Activated CD4-positive, alpha-beta memory T cell treated with anti-CD3 and anti-CD28 coated beads, Interleukin-2, amount 10 ng/mL, durations not matched to agents 7 days and 5 days (primary cell): ENCODE measurements at regions of chr18 and their contacts with region 1.

Region 1: GRCh38 chr18:50356036-50356945 is 18.6 kb upstream of the SKA1 start:
- DNase-seq: peak; percentile 33
- H3K4me3 Mint-ChIP-seq: no peak overlapping the region
- H3K27ac Mint-ChIP-seq: peak overlapping the region; percentile 38
- H3K4me1 Mint-ChIP-seq: peaks cover 19% of the 10 kb centered on the region
- H3K27me3 Mint-ChIP-seq: peaks cover 27% of the 10 kb centered on the region

Region 2: DNA sequence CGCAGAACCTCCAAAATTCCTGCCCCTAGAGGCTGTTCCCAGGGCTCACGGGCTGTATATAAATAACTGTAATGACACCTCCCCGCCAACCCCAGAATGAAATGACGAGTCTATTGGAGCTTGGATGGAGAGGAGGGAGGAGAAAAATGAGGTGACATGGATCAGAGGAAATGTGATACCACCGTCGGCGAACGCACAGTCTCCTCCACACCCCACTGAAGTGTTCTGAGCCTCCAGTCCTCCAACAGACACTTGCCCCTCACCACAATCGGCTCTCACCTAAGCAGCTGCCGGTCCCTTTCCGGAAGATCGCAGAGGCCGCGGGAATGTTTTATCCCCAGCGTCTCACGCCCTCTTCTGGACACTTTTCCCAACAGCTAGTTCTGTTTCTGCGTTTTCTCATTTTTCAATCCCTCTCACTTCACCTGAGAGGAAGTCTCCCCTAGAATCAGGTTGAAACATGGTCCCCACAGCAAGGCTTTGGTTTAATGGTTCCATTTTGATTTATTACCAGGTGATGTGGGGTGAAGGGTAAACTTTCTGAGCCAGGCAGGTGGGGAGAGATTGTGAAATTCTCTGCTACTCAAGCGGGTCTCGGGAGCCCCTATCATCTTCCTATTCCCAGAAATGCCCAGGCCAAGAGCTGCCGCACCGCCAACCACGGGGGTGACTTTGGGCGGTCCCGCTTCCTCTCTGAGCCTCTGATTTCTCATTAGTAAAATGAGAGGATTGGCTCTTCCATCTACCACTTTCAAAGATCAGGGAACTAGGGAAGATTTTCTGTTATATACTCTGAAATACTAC is 152.3 kb before region 1 on chr18:
- CTCF ChIA-PET with region 1: interaction called, 18 read pairs
- POLR2A ChIA-PET with region 1: no interaction called
- DNase-seq: no peak
- H3K4me3 Mint-ChIP-seq: no peak overlapping the region
- H3K27ac Mint-ChIP-seq: no peak overlapping the region
- H3K4me1 Mint-ChIP-seq: peaks cover 7% of the 10 kb centered on the region
- H3K27me3 Mint-ChIP-seq: peaks cover 55% of the 10 kb centered on the region

Region 3: GRCh38 chr18:50266248-50266704 is 90.0 kb before region 1 on chr18 and contains the start of gene CFAP53:
- CTCF ChIA-PET with region 1: interaction called, 66 read pairs
- POLR2A ChIA-PET with region 1: interaction called, 4 read pairs
- DNase-seq: peak; percentile 89
- H3K4me3 Mint-ChIP-seq: peak within 1 kb of the TSS; percentile 76
- H3K27ac Mint-ChIP-seq: peak within 1 kb of the TSS; percentile 56
- H3K4me1 Mint-ChIP-seq: peaks cover 31% of the 10 kb centered on the region
- H3K27me3 Mint-ChIP-seq: no peaks in the 10 kb centered on the region
- total RNA-seq, gene CFAP53: 0.50 to 0.83 TPM

Region 4: GRCh38 chr18:50287441-50288347 is 68.6 kb before region 1 on chr18 and contains the start of gene CXXC1:
- CTCF ChIA-PET with region 1: interaction called, 29 read pairs
- POLR2A ChIA-PET with region 1: interaction called, 14 read pairs
- DNase-seq: peak; percentile 98
- H3K4me3 Mint-ChIP-seq: peak within 1 kb of the TSS; percentile 98
- H3K27ac Mint-ChIP-seq: peak within 1 kb of the TSS; percentile 98
- H3K4me1 Mint-ChIP-seq: peaks cover 52% of the 10 kb centered on the region
- H3K27me3 Mint-ChIP-seq: no peaks in the 10 kb centered on the region
- total RNA-seq, gene CXXC1: 128 to 133 TPM

Region 5: DNA sequence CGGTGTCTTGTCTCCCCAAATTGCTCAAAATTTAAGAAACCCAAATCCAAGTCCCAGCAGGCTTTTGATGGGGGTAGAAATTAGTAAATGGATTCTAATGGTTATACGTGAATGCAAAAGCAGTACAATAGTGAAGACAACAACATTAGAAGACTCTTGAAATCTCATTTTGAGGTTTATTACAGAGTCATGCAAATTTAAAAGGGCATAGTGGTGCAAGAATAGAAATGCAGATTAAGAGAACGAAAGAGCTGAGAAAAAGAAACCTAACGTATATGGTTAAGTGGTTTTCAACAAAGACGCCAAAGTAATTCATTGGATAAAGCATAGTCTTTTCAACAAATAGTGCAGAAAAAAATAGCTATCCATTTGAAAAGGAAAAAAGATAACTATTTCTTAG is 35.6 kb before region 1 on chr18:
- CTCF ChIA-PET with region 1: interaction called, 11 read pairs
- POLR2A ChIA-PET with region 1: no interaction called
- DNase-seq: no peak
- H3K4me3 Mint-ChIP-seq: peak overlapping the region; percentile 55
- H3K27ac Mint-ChIP-seq: peak overlapping the region; percentile 73
- H3K4me1 Mint-ChIP-seq: peaks cover 25% of the 10 kb centered on the region
- H3K27me3 Mint-ChIP-seq: peaks cover 5% of the 10 kb centered on the region